ENCODE measurements at regions of chr10 and their contacts with region 1.

Region 1: GRCh38 chr10:100569618-100570473 is 34.1 kb downstream of the HIF1AN start:
- DNase-seq: no peak
- ATAC-seq: no peak
- H3K4me3 ChIP-seq: no peak overlapping the region
- H3K27ac ChIP-seq: no peak overlapping the region
- H3K4me1 ChIP-seq: no peaks in the 10 kb centered on the region
- H3K27me3 ChIP-seq: peaks cover 0 to 94% (median 83%) of the 10 kb centered on the region in 7 donors
- CTCF ChIP-seq: no peak

Region 2: GRCh38 chr10:100872034-100872791 is 302.4 kb after region 1 on chr10:
- intact Hi-C with region 1: loop called in 3 of 10 experiments (anchors 5 to 10 kb)
- DNase-seq: no peak
- ATAC-seq: no peak
- H3K4me3 ChIP-seq: no peak overlapping the region
- H3K27ac ChIP-seq: no peak overlapping the region
- H3K4me1 ChIP-seq: no peaks in the 10 kb centered on the region
- H3K27me3 ChIP-seq: peaks cover 0 to 76% (median 61%) of the 10 kb centered on the region in 7 donors
- CTCF ChIP-seq: peak in 7 of 9 donors; percentile 8 to 61 (median 44)

Measured in heart right ventricle (tissue), 16 donors.